A673 (cell line): ENCODE measurements at regions of chr15 and their contacts with region 1.

Region 1: DNA sequence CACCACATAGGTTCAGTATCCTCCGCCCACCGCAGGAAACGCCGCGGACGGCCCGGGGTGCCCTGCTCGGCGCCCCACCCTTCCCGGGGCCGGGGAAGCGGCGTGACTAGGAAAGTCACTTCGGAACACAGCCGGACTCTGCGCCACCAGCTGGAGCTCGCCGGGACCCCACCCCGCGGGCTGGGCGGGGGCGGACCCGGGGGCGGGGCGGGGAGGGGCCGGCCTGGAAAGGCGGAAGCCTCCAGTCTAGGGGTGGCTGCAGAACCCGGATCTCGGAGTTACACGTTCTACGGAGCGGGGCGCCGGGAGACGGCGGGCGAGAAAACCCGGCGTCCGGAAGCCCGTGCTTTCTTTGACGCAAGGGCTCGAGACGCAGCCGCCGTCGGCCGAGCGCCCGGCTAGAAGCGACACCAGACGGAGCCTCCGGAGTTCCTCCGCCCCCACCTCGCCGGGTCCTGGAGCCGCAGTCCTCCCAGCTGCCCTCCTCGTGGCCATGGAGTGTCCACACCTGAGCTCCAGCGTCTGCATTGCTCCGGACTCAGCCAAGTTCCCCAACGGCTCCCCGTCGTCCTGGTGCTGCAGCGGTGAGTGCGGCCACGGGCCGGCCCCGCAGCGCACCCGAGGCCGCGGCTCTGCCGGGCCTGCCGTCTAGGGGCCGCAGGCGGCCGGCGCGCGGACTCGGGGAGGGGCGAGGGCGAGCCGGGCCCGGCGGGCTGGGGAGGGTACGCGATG is at the start of gene USP3:
- DNase-seq: peak; percentile 97
- H3K4me3 ChIP-seq: peak within 1 kb of the TSS; percentile 85
- H3K27ac ChIP-seq: peak within 1 kb of the TSS; percentile 89
- H3K4me1 ChIP-seq: peaks cover 61% of the 10 kb centered on the region
- H3K27me3 ChIP-seq: no peaks in the 10 kb centered on the region
- CTCF ChIP-seq: no peak
- total RNA-seq, gene USP3: 65.3 and 76.7 TPM in 2 replicates

Region 2: DNA sequence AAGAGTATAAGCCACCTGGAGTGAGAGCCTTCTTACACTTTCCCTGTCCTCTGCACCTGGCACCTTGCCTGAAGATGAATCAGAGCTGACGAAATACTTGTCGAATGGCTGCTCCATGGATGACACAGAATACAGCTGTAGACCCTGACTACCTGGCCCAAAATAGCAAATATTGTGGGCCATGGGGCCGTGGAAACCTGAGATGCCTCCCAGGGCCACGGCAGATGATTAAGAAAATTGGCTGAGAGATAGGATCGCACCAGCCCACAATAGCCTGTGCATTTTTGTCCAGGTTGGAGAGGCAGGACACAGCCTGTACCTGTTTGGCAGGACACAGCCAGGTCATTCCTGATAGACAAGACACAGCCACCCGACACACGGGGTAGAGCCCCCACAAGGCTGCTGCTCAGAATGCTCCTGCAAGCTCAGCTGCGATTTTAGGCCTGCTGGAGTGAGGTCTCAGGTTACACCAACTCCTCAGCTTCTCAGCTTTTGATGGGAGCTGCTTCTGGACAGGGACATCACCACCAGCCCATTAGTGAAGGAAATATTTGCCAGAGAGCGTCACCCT is 484.8 kb before region 1 on chr15:
- CTCF ChIA-PET with region 1: no interaction called
- POLR2A ChIA-PET with region 1: no interaction called
- intact Hi-C with region 1: no loop called
- DNase-seq: no peak
- H3K4me3 ChIP-seq: no peak overlapping the region
- H3K27ac ChIP-seq: no peak overlapping the region
- H3K4me1 ChIP-seq: no peaks in the 10 kb centered on the region
- H3K27me3 ChIP-seq: no peaks in the 10 kb centered on the region
- CTCF ChIP-seq: no peak

Region 3: GRCh38 chr15:63522225-63522578 is 17.8 kb after region 1 on chr15:
- CTCF ChIA-PET with region 1: no interaction called
- POLR2A ChIA-PET with region 1: no interaction called
- intact Hi-C with region 1: no loop called
- DNase-seq: no peak
- H3K4me3 ChIP-seq: no peak overlapping the region
- H3K27ac ChIP-seq: no peak overlapping the region
- H3K4me1 ChIP-seq: peaks cover 33% of the 10 kb centered on the region
- H3K27me3 ChIP-seq: no peaks in the 10 kb centered on the region
- CTCF ChIP-seq: no peak

Region 4: GRCh38 chr15:63600616-63601025 is 96.2 kb after region 1 on chr15:
- CTCF ChIA-PET with region 1: no interaction called
- POLR2A ChIA-PET with region 1: no interaction called
- intact Hi-C with region 1: loop called (anchors 5 kb)
- DNase-seq: peak; percentile 96
- H3K4me3 ChIP-seq: peak overlapping the region; percentile 77
- H3K27ac ChIP-seq: peak overlapping the region; percentile 84
- H3K4me1 ChIP-seq: peaks cover 17% of the 10 kb centered on the region
- H3K27me3 ChIP-seq: no peaks in the 10 kb centered on the region
- CTCF ChIP-seq: no peak

Region 5: GRCh38 chr15:64324165-64324877 is 819.9 kb after region 1 on chr15:
- CTCF ChIA-PET with region 1: no interaction called
- POLR2A ChIA-PET with region 1: interaction called, 11 read pairs
- intact Hi-C with region 1: no loop called
- DNase-seq: no peak
- H3K4me3 ChIP-seq: no peak overlapping the region
- H3K27ac ChIP-seq: no peak overlapping the region
- H3K4me1 ChIP-seq: no peaks in the 10 kb centered on the region
- H3K27me3 ChIP-seq: no peaks in the 10 kb centered on the region
- CTCF ChIP-seq: no peak